ENCODE measurements at regions of chr19 and their contacts with region 1.

Region 1: GRCh38 chr19:3324321-3324856 is 42.0 kb upstream of the NFIC start:
- DNase-seq: peak; percentile 62
- H3K4me3 ChIP-seq: no peak overlapping the region
- H3K27ac ChIP-seq: no peak overlapping the region
- H3K4me1 ChIP-seq: peaks cover 6% of the 10 kb centered on the region
- H3K27me3 ChIP-seq: peaks cover 18% of the 10 kb centered on the region
- CTCF ChIP-seq: peak; percentile 83

Region 2: DNA sequence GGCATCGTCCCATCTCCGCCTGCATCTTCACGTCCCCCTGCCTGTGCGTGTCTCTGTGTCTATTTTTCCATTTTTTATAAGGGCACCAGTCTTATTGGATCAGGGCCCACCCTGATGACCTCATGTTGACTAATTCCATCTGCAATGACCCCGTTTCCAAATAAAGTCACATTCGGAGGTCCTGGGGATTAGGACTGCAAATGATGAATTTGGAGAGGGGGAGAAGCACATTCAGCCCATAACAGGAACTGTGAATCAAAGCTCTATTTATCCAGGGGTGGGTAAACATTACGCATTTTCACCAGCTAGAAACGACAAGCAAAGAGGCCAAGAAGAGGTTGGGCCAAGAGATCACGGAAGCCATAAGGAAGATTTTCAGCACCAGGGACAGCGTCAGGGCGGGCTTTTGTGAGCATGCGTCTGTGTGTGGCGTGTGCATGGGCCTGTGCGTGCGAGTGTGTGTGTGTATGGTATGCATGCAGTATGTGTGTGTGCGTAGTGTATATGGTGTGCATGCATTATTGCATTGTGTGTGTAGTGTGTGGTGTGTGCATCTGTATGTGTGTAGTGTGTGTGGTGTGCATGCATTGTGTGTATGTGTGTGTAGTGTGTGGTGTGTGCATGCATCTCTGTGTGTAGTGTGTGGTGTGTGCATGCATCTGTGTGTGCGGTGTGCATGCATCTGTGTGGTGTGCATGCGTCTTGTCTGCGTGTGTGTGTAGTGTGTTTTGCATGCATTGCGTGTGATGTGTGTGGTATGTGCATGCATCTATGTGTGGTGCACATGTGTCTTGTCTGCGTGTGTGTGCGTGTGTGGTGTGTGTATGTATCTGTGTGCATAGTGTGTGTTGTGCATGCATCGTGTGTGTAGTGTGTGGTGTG is 80.3 kb before region 1 on chr19:
- CTCF ChIA-PET with region 1: no interaction called
- POLR2A ChIA-PET with region 1: no interaction called
- intact Hi-C with region 1: no loop called
- DNase-seq: peak; percentile 76
- H3K4me3 ChIP-seq: no peak overlapping the region
- H3K27ac ChIP-seq: no peak overlapping the region
- H3K4me1 ChIP-seq: peaks cover 5% of the 10 kb centered on the region
- H3K27me3 ChIP-seq: no peaks in the 10 kb centered on the region
- CTCF ChIP-seq: no peak

Region 3: GRCh38 chr19:3369337-3370213 is 45.2 kb after region 1 on chr19:
- CTCF ChIA-PET with region 1: no interaction called
- POLR2A ChIA-PET with region 1: no interaction called
- intact Hi-C with region 1: no loop called
- DNase-seq: peak; percentile 71
- H3K4me3 ChIP-seq: peak overlapping the region; percentile 78
- H3K27ac ChIP-seq: peak overlapping the region; percentile 96
- H3K4me1 ChIP-seq: peaks cover 41% of the 10 kb centered on the region
- H3K27me3 ChIP-seq: no peaks in the 10 kb centered on the region
- CTCF ChIP-seq: 0 out of 2 replicates have a peak, but pooled peaks have one; percentile 19

Region 4: GRCh38 chr19:3429581-3430080 is 105.2 kb after region 1 on chr19:
- CTCF ChIA-PET with region 1: interaction called, 9 read pairs
- POLR2A ChIA-PET with region 1: no interaction called
- intact Hi-C with region 1: loop called (anchors 5 kb)
- DNase-seq: peak; percentile 84
- H3K4me3 ChIP-seq: no peak overlapping the region
- H3K27ac ChIP-seq: peak overlapping the region; percentile 84
- H3K4me1 ChIP-seq: peaks cover 23% of the 10 kb centered on the region
- H3K27me3 ChIP-seq: no peaks in the 10 kb centered on the region
- CTCF ChIP-seq: peak; percentile 93

Region 5: DNA sequence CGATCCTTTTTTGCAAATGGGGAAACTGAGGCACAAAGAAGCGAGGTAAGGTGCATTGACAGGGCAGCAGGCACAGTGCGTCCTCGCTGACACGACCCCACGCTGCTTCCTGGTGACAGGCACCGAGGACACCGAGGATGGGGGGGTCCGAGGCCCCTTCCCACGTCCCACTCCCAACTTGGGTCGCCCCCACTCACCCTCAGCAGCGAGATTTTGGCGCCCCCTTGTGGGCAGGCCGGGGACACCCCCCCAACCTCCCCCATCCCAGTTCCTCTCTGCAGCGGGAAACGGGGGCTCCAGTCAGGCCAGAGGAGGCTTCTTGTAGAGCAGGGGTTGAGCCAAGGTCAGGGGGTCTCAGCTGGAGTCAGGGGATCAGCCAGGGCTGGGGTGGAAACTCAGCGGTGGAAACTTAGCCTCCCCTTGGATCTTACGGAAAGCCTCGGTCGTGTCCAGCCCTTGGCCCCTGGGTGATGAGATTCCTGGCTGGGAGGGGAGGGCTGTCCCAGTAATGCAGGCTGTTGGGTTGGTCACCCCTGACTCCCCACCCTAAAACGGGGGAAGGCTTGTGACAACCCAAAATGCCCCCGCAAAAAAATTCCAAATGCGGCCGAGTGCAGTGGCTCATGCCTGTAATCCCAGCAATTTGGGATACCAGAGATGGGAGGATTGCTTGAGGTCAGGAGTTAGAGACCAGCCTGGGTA is 147.7 kb after region 1 on chr19:
- CTCF ChIA-PET with region 1: no interaction called
- POLR2A ChIA-PET with region 1: no interaction called
- intact Hi-C with region 1: loop called (anchors 1 kb)
- DNase-seq: peak; percentile 46
- H3K4me3 ChIP-seq: no peak overlapping the region
- H3K27ac ChIP-seq: no peak overlapping the region
- H3K4me1 ChIP-seq: no peaks in the 10 kb centered on the region
- H3K27me3 ChIP-seq: peaks cover 3% of the 10 kb centered on the region
- CTCF ChIP-seq: peak; percentile 97

Region 6: DNA sequence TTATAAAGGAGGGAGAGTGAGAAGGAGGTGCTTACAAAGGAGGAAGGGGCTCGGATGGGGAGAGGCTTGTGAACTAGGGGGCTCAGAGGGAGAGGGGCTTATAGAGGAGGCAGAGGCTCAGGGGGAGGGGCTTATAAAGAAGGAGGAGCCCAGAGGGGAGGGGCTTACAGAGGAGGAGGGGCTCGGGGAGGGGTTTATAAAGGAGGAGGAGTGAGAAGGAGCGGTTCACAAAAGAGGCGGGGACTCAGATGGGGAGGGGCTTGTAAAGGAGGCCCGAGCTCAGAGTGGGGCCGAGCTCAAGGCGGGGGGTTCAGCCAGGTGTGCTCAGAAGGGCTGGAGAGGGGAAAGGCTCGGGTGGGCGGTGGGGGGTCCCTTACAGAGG is 155.4 kb after region 1 on chr19:
- CTCF ChIA-PET with region 1: interaction called, 12 read pairs
- POLR2A ChIA-PET with region 1: no interaction called
- intact Hi-C with region 1: loop called (anchors 5 kb)
- DNase-seq: peak; percentile 43
- H3K4me3 ChIP-seq: no peak overlapping the region
- H3K27ac ChIP-seq: no peak overlapping the region
- H3K4me1 ChIP-seq: no peaks in the 10 kb centered on the region
- H3K27me3 ChIP-seq: peaks cover 40% of the 10 kb centered on the region
- CTCF ChIP-seq: no peak

Region 7: GRCh38 chr19:3494051-3494450 is 169.7 kb after region 1 on chr19:
- CTCF ChIA-PET with region 1: no interaction called
- POLR2A ChIA-PET with region 1: no interaction called
- intact Hi-C with region 1: loop called (anchors 5 kb)
- DNase-seq: no peak
- H3K4me3 ChIP-seq: no peak overlapping the region
- H3K27ac ChIP-seq: no peak overlapping the region
- H3K4me1 ChIP-seq: no peaks in the 10 kb centered on the region
- H3K27me3 ChIP-seq: no peaks in the 10 kb centered on the region
- CTCF ChIP-seq: no peak

Region 8: DNA sequence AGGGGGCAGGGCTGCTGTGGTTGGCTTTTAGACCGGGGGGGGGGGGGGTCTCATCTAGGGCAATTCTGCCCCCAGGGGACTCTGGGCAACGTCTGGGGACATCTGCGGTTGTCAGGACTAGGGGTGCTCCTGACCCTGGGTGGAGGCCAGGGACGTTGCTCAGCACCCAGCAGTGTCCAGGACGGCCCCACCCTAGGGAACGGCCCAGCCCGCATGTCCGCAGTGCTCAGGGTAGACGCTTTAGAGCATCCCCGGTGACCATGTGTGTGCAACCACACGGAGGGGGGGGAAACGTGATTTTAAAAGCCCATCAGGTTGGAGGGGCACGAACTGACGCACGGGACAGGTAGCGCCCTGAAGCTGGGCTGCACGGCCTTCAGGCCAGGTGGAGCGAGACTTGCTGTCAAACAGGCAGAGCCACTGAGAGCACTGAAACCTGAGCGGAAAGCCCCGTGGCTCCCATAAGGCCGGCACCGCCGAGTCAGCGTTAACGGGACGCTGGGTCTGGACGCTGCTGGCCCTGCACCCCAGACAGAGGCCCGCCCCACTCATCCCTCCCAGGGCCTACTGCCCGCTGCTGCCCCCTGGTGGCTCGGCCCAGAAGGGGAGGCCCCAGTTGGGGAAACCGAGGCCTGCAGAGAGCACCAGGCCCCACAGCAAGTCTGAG is 293.9 kb after region 1 on chr19:
- CTCF ChIA-PET with region 1: no interaction called
- POLR2A ChIA-PET with region 1: no interaction called
- intact Hi-C with region 1: loop called (anchors 5 kb)
- DNase-seq: peak; percentile 66
- H3K4me3 ChIP-seq: no peak overlapping the region
- H3K27ac ChIP-seq: no peak overlapping the region
- H3K4me1 ChIP-seq: no peaks in the 10 kb centered on the region
- H3K27me3 ChIP-seq: no peaks in the 10 kb centered on the region
- CTCF ChIP-seq: peak; percentile 95